ENCODE measurements at regions of chr7 and their contacts with region 1.

Region 1: DNA sequence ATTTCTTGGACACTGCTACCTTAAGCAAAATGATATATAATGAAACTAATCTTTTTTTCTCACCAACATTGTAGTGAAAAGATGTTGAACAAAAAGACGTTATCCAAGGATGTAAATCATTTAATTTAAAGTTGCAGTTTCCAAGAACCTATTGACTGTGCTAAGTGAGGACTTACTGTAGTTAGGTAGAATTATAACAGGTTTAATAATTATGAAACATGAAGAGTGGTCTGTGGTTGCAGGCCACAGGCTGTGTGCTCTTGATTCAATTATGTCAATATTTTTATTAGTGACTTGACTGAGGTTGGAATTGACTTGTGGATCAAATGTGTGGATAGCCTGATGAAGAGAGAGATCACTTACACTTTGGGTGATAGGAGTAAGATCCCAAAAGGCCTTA is 478.1 kb downstream of the AUTS2 start:
- DNase-seq: no peak
- H3K4me3 ChIP-seq: no peak overlapping the region
- H3K27ac ChIP-seq: no peak overlapping the region
- H3K4me1 ChIP-seq: peaks cover 3% of the 10 kb centered on the region
- H3K27me3 ChIP-seq: no peaks in the 10 kb centered on the region
- CTCF ChIP-seq: no peak
- EP300 ChIP-seq: no peak
- POLR2A ChIP-seq: no peak

Region 2: GRCh38 chr7:69782917-69783684 is 293.2 kb before region 1 on chr7:
- intact Hi-C with region 1: no loop called
- DNase-seq: peak; percentile 60 to 84 (median 60)
- H3K4me3 ChIP-seq: no peak overlapping the region
- H3K27ac ChIP-seq: no peak overlapping the region
- H3K4me1 ChIP-seq: peaks cover 29% of the 10 kb centered on the region
- H3K27me3 ChIP-seq: no peaks in the 10 kb centered on the region
- CTCF ChIP-seq: no peak
- EP300 ChIP-seq: no peak
- POLR2A ChIP-seq: no peak

Region 3: DNA sequence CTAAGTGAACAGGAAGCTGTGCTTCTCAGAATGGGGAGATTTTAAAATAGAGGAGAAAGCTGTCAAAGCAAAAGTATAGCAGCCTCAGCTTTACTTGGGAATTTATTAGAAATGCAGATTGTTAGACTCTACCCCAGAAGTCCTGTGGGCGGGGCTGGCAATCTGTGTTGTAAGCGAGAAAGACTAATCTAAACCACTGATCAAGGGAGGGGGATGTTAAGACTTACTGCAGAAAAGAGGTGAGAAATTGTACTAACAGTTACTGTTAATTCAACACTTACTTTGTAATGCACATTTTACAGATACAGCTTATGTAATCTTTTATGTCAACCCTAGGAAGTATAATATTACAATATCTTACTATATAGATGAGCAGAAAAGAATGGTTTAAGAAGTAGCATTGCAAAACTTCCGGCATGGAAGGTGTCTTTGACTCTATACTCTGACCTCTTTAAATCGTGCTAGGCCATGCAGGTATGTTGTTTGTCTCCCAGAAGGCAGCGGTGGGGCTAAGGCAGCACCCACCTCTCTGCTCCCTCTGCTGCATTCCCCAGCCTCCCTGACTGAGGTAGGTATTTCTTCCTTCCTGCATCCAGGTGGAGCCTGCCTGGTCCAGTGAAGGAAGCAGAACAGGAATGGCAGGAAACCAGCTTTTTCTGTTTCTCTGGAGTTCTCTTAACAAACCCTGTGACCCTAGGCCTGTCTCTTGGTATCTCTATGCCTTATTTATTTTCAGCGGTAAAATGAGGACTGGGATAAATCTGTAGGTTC is 15.8 kb before region 1 on chr7:
- intact Hi-C with region 1: loop called in 1 of 4 experiments (anchors 2 kb)
- DNase-seq: no peak
- H3K4me3 ChIP-seq: no peak overlapping the region
- H3K27ac ChIP-seq: no peak overlapping the region
- H3K4me1 ChIP-seq: peaks cover 5% of the 10 kb centered on the region
- H3K27me3 ChIP-seq: no peaks in the 10 kb centered on the region
- CTCF ChIP-seq: no peak
- EP300 ChIP-seq: no peak
- POLR2A ChIP-seq: no peak

Region 4: DNA sequence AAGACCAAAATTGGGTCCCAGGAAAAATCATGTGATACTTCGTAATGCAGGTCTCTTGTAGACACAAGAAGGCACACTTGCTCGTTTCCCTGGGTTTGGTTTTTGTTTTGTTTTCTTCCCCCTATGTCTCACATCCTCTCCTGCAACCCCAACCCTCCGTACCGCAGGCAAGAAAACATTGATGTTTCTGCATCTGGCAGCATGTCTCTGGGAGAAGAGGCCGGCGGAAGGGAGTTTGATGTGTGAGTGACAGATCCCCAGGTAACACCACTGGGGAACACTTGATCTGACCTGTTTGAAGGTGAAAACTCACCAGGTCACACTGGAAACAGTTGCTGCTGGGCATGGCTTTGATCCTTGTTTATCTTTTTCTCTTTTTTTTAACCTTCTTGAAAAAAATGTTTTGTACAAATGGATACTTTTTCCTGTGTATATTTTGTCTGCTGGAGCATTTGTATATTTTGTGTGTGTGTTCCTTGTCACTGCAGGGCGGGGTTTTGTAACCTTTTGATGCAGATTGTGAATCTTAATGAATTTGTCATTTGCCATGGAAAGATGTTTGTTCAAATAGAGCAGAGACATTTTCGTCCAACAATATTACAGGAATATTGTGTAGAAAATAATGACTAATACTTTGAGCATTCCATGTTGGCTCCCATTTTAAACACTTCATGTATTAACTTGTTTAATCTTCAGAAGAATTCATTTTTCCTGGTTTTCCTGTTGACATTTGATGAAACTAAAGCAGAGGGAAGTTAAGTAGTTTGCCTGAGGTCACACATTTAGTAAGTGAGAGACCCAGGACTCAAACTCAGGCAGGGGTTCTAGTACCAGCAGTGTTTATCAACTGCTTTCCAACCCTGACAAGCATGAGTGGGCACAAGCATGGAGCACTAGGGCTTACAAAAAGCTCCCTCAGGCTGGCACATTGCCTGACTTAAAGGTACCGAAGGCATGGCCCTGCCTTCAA is 240.7 kb after region 1 on chr7:
- intact Hi-C with region 1: no loop called
- DNase-seq: no peak
- H3K4me3 ChIP-seq: no peak overlapping the region
- H3K27ac ChIP-seq: no peak overlapping the region
- H3K4me1 ChIP-seq: peaks cover 3% of the 10 kb centered on the region
- H3K27me3 ChIP-seq: no peaks in the 10 kb centered on the region
- CTCF ChIP-seq: no peak
- EP300 ChIP-seq: no peak
- POLR2A ChIP-seq: no peak